ENCODE measurements at regions of chr11 and their contacts with region 1.

Region 1: GRCh38 chr11:1832211-1832919 is 2.4 kb upstream of the SYT8 start:
- DNase-seq: peak; percentile 81
- ATAC-seq: peak; percentile 75
- H3K4me3 Mint-ChIP-seq: no peak overlapping the region
- H3K27ac Mint-ChIP-seq: no peak overlapping the region
- H3K4me1 Mint-ChIP-seq: no peaks in the 10 kb centered on the region
- H3K27me3 Mint-ChIP-seq: no peaks in the 10 kb centered on the region

Region 2: DNA sequence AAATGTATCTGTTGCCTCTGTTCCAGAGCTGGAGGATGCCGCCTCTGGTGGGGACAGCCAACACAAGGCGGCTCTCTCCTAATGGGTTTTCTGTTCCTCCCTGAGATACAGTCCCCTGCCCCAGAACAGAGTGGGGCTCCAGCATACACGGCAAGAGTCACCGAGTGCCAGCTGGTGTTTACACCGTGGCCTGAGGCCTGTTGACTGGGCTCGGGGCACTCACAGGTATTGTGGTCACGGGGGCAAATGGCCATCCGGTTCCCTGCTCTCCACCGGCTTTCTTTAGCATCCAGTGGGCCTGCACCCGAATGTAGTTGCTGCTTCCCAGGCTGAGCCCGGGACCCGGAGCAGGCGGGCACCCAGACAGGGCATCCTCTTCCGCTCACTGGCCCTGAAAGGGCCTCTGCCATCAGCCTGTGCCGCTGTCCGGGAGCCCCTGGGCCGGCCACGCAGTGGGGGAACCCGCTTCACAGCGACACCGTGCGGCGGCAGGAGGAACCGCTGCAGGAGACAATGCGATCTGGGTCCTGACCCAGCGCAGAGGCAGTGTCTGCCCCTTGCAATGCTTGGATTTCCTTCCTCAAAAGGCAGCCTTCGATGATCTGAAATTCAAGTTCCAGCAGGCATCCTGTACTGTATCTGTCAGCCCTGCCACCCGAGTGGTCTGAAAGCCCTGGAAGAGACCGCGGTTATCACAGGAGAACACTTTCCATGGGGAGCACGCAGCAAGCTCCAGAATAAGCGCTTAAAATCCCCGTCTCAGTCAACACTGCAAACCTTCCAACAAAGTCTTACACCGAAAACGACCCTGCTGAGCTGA is 203.6 kb before region 1 on chr11:
- CTCF ChIA-PET with region 1: no interaction called
- POLR2A ChIA-PET with region 1: no interaction called
- intact Hi-C with region 1: no loop called
- DNase-seq: peak; percentile 78
- ATAC-seq: peak; percentile 98
- H3K4me3 Mint-ChIP-seq: no peak overlapping the region
- H3K27ac Mint-ChIP-seq: no peak overlapping the region
- H3K4me1 Mint-ChIP-seq: peaks cover 5% of the 10 kb centered on the region
- H3K27me3 Mint-ChIP-seq: peaks cover 18% of the 10 kb centered on the region

Region 3: DNA sequence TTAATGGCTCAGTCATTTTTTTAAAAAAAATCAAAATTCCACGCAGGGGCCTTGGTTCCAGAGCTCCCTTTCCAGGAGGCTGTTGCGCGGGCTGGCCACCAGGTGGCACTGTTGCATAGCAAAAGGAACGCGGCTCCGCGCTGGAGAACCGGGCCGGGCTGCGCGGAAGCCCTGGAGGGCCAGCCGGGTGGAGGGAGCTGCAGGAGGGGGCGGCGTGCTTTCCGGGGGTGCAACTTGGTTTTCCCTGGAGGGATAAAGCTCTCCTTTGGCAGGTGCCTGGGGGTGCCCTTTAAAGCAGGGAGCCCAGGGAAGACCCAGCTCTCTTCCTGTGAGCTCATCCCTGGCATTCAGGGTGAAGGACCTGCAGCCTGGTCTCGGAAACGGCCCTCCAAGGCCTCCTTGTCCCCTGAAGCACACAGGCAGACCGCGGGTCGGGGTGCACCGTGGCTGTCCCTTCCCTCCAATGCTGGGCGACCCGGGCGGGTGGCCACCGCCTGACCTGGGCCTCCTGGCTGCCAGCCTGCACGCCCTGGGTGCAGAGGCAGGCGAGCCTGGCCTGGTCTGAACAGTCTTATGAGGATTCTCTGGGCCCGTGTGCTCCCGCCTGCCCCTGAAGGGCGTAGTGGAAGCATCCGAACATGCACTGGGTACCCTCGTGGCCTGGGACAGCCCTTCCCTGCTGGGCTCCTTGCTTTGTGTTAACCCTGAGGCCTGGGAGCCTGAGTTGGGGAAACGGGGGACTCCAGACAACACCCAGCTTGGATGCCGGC is 179.4 kb before region 1 on chr11:
- CTCF ChIA-PET with region 1: interaction called, 23 read pairs
- POLR2A ChIA-PET with region 1: no interaction called
- intact Hi-C with region 1: loop called (anchors 1 to 2 kb)
- DNase-seq: peak; percentile 86
- ATAC-seq: peak; percentile 91
- H3K4me3 Mint-ChIP-seq: no peak overlapping the region
- H3K27ac Mint-ChIP-seq: no peak overlapping the region
- H3K4me1 Mint-ChIP-seq: no peaks in the 10 kb centered on the region
- H3K27me3 Mint-ChIP-seq: peaks cover 3% of the 10 kb centered on the region

Region 4: DNA sequence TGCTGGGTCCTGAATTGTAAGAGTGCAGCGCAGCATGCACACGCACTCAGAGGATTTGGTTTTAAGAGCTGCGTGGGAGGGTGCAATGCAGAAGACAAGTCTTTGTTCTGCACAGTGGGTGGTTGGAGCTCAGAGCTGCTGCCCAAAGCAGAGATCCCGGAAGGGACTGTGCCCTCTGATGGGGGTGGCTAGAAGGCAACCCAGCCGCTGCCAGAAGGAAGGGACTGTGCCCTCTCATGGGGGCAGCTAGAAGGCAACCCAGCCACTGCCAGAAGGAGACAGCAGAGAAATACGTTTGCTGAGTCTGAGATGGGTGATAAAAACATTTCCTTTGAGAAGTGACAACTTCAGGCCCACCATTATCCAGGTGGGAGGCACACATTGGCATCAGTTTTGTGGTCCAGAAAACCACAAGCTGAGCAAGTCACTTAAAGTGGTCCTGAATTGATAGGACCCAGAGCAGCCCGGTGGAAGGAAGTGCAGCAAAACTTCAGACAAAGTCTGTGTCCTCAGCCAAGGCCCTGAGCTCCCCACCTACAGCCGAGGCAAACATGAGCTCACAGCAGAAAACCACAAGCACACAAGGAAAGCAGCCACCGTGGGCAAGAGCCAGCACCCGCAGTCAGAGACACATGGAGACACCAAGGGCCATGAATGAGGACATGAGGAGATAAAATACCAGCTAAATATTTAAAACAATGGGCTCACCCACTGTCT is 131.1 kb before region 1 on chr11:
- CTCF ChIA-PET with region 1: interaction called, 14 read pairs
- POLR2A ChIA-PET with region 1: no interaction called
- intact Hi-C with region 1: no loop called
- DNase-seq: peak; percentile 48
- ATAC-seq: peak; percentile 57
- H3K4me3 Mint-ChIP-seq: no peak overlapping the region
- H3K27ac Mint-ChIP-seq: peak overlapping the region; percentile 7
- H3K4me1 Mint-ChIP-seq: peaks cover 23% of the 10 kb centered on the region
- H3K27me3 Mint-ChIP-seq: no peaks in the 10 kb centered on the region

Region 5: GRCh38 chr11:1763796-1764661 is 68.3 kb before region 1 on chr11 and contains the start of gene CTSD:
- CTCF ChIA-PET with region 1: no interaction called
- POLR2A ChIA-PET with region 1: no interaction called
- intact Hi-C with region 1: no loop called
- DNase-seq: peak; percentile 94
- ATAC-seq: peak; percentile 91
- H3K4me3 Mint-ChIP-seq: peak within 1 kb of the TSS; percentile 83
- H3K27ac Mint-ChIP-seq: peak within 1 kb of the TSS; percentile 58
- H3K4me1 Mint-ChIP-seq: peaks cover 35% of the 10 kb centered on the region
- H3K27me3 Mint-ChIP-seq: no peaks in the 10 kb centered on the region
- total RNA-seq, gene CTSD: 38.8 to 41.5 TPM

Region 6: GRCh38 chr11:1844221-1845094 is 12.1 kb after region 1 on chr11:
- CTCF ChIA-PET with region 1: no interaction called
- POLR2A ChIA-PET with region 1: no interaction called
- intact Hi-C with region 1: no loop called
- DNase-seq: peak; percentile 62
- ATAC-seq: peak; percentile 72
- H3K4me3 Mint-ChIP-seq: peak overlapping the region; percentile 46
- H3K27ac Mint-ChIP-seq: peak overlapping the region; percentile 91
- H3K4me1 Mint-ChIP-seq: peaks cover 47% of the 10 kb centered on the region
- H3K27me3 Mint-ChIP-seq: no peaks in the 10 kb centered on the region

Region 7: GRCh38 chr11:1882519-1883238 is 50.3 kb after region 1 on chr11:
- CTCF ChIA-PET with region 1: interaction called, 13 read pairs
- POLR2A ChIA-PET with region 1: no interaction called
- intact Hi-C with region 1: loop called (anchors 1 to 5 kb)
- DNase-seq: peak; percentile 92
- ATAC-seq: peak; percentile 93
- H3K4me3 Mint-ChIP-seq: no peak overlapping the region
- H3K27ac Mint-ChIP-seq: no peak overlapping the region
- H3K4me1 Mint-ChIP-seq: peaks cover 2% of the 10 kb centered on the region
- H3K27me3 Mint-ChIP-seq: no peaks in the 10 kb centered on the region

Region 8: GRCh38 chr11:2002807-2003206 is 170.4 kb after region 1 on chr11:
- CTCF ChIA-PET with region 1: interaction called, 28 read pairs
- POLR2A ChIA-PET with region 1: no interaction called
- intact Hi-C with region 1: no loop called
- DNase-seq: no peak
- ATAC-seq: peak; percentile 63
- H3K4me3 Mint-ChIP-seq: no peak overlapping the region
- H3K27ac Mint-ChIP-seq: no peak overlapping the region
- H3K4me1 Mint-ChIP-seq: no peaks in the 10 kb centered on the region
- H3K27me3 Mint-ChIP-seq: no peaks in the 10 kb centered on the region